ENCODE measurements at regions of chr5 and their contacts with region 1.

Region 1: DNA sequence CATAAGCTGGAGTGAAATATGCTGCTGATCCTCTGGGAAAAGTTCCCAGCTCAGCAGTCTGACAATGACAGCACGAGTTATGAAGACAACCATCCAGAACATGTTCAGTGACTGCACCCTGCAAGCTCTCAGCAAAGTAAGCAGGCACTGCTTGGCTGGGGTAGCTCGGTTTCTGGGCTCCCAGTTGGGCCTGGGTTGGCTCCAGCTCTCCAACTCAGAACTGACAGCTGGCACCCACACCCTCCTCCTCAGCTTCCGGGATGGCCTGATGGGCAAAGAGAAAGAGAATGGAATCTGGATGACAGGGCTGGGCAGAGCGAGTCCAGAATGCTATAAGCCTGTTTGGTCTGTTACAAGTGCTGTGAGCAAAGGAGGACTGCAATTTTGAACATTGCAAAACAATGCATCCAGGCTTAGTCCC is 185.0 kb downstream of the CSNK1G3 start:
- DNase-seq: peak; percentile 76 to 98 (median 86)

Region 2: DNA sequence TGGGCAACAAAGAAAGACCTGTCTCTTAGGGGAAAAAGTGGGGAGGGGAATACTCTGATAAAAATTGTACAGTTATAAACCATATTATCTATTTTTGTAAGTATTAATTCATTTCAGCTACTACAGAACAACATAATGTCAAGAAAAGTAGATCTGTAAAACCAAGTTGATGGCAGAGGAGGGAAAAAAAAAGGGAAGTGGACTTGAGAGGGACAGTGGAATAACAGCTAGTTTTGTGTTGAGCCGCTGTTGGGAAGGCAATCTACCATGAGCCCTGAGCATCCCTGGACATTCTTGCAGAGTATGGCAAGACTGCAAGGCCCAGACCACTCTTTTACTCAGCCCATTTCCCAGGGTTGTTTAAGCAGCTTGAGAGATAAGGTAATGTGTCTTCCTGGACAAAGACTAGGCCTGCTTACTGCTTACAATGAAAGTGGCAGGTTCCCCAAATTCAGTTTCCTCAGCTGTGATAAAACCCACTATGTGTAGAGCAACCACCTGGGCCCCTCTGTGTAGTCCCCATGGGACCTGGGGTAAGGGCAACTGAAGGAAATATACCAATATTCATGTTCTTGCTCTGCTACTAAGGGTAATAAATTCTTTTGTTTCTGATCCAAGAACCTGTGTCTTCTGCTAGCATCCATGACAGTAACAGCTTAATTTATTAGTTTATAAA is 298.7 kb before region 1 on chr5:
- intact Hi-C with region 1: no loop called
- DNase-seq: no peak

Region 3: DNA sequence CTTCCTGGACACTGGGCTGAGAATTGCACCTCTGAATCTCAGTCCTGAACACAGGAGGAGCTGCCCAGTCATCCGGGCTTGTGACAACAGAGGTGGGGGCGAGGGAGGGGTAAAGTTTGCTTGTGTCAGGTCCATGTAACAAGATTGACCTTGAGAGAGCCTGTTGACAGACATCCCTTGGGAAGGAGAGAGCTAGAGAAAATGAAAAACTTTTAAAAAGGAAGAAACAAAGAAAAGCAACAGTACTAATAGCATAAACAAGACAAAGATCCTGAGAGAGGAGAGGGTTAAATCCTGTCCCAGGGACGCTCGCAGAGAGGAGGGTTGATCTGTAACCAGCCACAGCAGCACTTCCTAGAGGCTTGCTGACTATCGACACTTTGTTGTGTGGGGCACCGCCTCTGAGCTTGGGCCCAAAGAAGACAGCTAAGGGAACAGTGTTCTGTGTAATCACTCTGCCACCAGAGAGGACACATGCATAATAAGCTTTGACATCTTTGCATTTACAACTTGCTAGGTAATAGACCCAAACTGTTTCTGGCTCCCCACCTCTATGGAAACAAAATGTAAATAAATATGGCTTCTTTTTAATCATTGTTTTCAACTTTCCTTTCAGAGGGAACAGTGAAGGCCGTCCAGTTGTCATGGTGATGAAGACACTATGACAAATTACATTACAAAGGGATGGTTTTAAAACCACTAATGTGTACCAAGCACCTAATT is 178.8 kb after region 1 on chr5:
- intact Hi-C with region 1: loop called (anchors 1 kb)
- DNase-seq: peak in 9 of 10 donors; percentile 35 to 94 (median 52)

Region 4: GRCh38 chr5:124252191-124252638 is 555.3 kb after region 1 on chr5:
- intact Hi-C with region 1: loop called (anchors 5 kb)
- DNase-seq: no peak